ENCODE measurements at regions of chr12 and their contacts with region 1.

Region 1: DNA sequence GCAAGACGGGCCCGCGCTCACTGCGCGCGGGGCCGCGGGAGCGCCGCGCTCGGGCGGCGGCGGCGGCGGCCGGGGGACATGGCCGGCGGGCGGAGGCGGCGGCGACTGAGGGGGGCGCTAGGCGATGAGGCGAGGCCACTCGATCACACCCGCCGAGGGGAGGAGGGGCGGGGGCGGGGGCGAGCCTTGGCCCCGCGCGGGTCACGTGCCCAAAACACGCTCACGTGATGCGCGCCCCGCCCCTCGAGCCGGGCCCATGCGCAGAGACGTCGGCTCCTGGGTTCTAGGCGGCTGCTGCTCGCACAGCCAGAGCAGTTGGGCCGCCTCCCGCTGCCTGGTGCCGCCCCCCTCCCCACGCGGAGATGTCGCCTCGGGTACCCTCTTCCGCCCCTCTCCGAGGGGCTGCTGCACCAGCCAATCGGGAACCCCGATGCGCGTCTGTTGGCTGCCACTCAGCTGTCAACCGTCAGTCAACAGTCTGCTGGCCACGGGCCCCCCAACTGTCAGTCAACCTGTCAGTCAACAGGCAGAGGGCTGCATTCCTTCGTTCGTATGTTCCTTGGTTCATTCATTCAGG is at the start of gene SPPL3:
- DNase-seq: peak; percentile 86
- H3K4me3 Mint-ChIP-seq: peak within 1 kb of the TSS; percentile 100
- H3K27ac Mint-ChIP-seq: peak within 1 kb of the TSS; percentile 94
- H3K4me1 Mint-ChIP-seq: peaks cover 39% of the 10 kb centered on the region
- H3K27me3 Mint-ChIP-seq: no peaks in the 10 kb centered on the region
- CTCF ChIP-seq: no peak
- total RNA-seq, gene SPPL3: 32.6 and 43.7 TPM in 2 replicates

Region 2: DNA sequence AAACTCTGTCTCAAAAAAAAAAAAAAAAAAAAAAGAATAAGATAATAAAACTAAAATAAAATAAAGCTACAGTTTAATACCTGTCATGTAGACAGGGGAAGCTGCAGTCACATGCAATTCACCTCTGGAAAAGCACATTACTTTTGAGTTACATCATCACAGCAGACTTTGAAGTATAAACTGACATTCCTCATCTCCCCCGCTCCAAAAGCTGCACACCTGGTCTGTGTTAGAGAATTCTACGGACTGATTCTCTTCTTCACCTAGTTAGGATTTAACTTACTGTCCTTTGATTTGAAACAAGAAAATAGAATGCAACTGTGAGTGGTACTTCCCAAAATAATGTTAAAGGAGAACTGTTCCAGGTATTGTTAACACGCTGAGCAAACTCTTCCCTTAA is 25.2 kb before region 1 on chr12:
- CTCF ChIA-PET with region 1: interaction called, 3 read pairs
- POLR2A ChIA-PET with region 1: interaction called, 11 read pairs
- intact Hi-C with region 1: no loop called
- DNase-seq: no peak
- H3K4me3 Mint-ChIP-seq: no peak overlapping the region
- H3K27ac Mint-ChIP-seq: no peak overlapping the region
- H3K4me1 Mint-ChIP-seq: peaks cover 18% of the 10 kb centered on the region
- H3K27me3 Mint-ChIP-seq: no peaks in the 10 kb centered on the region
- CTCF ChIP-seq: no peak

Region 3: DNA sequence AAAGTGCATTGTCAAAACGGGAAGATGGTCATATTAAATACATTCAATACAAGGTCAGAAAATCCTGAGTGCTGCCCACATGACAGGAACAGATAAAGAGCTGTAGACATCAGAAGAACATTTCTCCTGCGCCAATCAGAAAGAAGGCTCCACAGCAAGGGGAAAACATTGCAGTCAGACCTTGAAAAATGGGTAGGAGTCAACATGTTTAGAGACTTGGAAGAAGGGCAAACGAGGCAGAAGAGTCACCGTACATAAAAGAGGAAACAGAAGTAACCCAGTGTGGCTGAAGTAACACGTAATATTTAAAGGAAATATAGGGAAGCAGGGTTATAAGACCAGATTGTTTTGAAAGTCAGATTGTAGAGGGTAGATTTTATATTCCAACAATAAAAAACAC is 12.0 kb before region 1 on chr12:
- CTCF ChIA-PET with region 1: no interaction called
- POLR2A ChIA-PET with region 1: interaction called, 13 read pairs
- intact Hi-C with region 1: no loop called
- DNase-seq: no peak
- H3K4me3 Mint-ChIP-seq: no peak overlapping the region
- H3K27ac Mint-ChIP-seq: no peak overlapping the region
- H3K4me1 Mint-ChIP-seq: peaks cover 6% of the 10 kb centered on the region
- H3K27me3 Mint-ChIP-seq: no peaks in the 10 kb centered on the region
- CTCF ChIP-seq: no peak

Region 4: DNA sequence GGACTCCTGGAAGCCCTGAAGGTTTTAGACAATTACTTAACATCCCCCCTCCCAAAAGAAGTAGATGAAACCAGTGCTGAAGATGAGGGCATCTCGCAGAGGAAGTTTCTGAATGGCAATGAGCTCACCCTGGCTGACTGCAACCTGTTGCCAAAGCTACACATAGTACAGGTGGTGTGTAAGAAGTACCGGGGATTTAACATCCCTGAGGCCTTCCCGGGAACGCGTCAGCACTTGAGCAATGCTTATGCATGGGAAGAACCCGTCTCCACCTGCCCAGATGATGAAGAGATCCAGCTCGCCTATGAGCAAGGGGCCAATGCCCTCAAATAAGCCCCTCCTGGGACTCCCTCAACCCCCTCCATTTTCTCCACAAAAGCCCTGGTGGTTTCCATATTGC is 10.5 kb after region 1 on chr12:
- CTCF ChIA-PET with region 1: interaction called, 4 read pairs
- POLR2A ChIA-PET with region 1: interaction called, 15 read pairs
- intact Hi-C with region 1: no loop called
- DNase-seq: peak; percentile 90
- H3K4me3 Mint-ChIP-seq: no peak overlapping the region
- H3K27ac Mint-ChIP-seq: no peak overlapping the region
- H3K4me1 Mint-ChIP-seq: no peaks in the 10 kb centered on the region
- H3K27me3 Mint-ChIP-seq: no peaks in the 10 kb centered on the region
- CTCF ChIP-seq: no peak

Region 5: DNA sequence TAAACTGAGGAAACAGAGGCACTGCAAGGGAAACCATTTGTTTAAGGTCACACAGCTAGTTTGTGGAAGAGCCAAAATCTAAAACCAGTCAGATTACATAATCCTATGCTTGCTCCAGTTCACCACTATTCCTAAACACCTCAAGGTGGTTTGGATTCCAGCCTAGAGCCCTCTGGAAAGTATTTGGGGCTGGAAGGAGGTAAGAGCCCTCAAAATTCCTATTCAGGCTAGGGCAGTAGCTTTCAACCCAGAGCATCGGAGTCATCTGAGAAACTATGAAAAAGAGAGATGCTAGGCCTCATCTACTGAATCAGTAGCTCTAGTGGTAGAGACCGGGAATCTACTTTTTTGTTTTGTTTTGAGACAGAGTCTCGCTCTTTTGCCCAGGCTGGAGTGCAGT is 15.9 kb after region 1 on chr12:
- CTCF ChIA-PET with region 1: interaction called, 6 read pairs
- POLR2A ChIA-PET with region 1: interaction called, 48 read pairs
- intact Hi-C with region 1: no loop called
- DNase-seq: no peak
- H3K4me3 Mint-ChIP-seq: no peak overlapping the region
- H3K27ac Mint-ChIP-seq: no peak overlapping the region
- H3K4me1 Mint-ChIP-seq: peaks cover 6% of the 10 kb centered on the region
- H3K27me3 Mint-ChIP-seq: no peaks in the 10 kb centered on the region
- CTCF ChIP-seq: no peak

Region 6: GRCh38 chr12:120925740-120926583 is 21.7 kb after region 1 on chr12:
- CTCF ChIA-PET with region 1: interaction called, 6 read pairs
- POLR2A ChIA-PET with region 1: interaction called, 48 read pairs
- intact Hi-C with region 1: no loop called
- DNase-seq: peak; percentile 97
- H3K4me3 Mint-ChIP-seq: peak overlapping the region; percentile 7
- H3K27ac Mint-ChIP-seq: peak overlapping the region; percentile 84
- H3K4me1 Mint-ChIP-seq: peaks cover 12% of the 10 kb centered on the region
- H3K27me3 Mint-ChIP-seq: no peaks in the 10 kb centered on the region
- CTCF ChIP-seq: no peak